Transverse colon (tissue), 4 donors: ENCODE measurements at regions of chr12 and their contacts with region 1.

Region 1: GRCh38 chr12:115752913-115753726 is 524.4 kb downstream of the MED13L start:
- DNase-seq: peak; percentile 14
- H3K4me3 ChIP-seq: no peak overlapping the region
- H3K27ac ChIP-seq: no peak overlapping the region
- H3K4me1 ChIP-seq: peaks cover 0 to 3% (median 0%) of the 10 kb centered on the region in 4 donors
- H3K27me3 ChIP-seq: peaks cover 45% of the 10 kb centered on the region
- CTCF ChIP-seq: peak; percentile 52 to 70 (median 63)
- EP300 ChIP-seq: no peak
- POLR2A ChIP-seq: no peak

Region 2: GRCh38 chr12:114073076-114073475 is 1680.0 kb before region 1 on chr12:
- in situ Hi-C with region 1: no loop called
- intact Hi-C with region 1: no loop called
- DNase-seq: no peak
- H3K4me3 ChIP-seq: no peak overlapping the region
- H3K27ac ChIP-seq: no peak overlapping the region
- H3K4me1 ChIP-seq: no peaks in the 10 kb centered on the region
- H3K27me3 ChIP-seq: no peaks in the 10 kb centered on the region
- CTCF ChIP-seq: no peak
- EP300 ChIP-seq: no peak
- POLR2A ChIP-seq: no peak

Region 3: DNA sequence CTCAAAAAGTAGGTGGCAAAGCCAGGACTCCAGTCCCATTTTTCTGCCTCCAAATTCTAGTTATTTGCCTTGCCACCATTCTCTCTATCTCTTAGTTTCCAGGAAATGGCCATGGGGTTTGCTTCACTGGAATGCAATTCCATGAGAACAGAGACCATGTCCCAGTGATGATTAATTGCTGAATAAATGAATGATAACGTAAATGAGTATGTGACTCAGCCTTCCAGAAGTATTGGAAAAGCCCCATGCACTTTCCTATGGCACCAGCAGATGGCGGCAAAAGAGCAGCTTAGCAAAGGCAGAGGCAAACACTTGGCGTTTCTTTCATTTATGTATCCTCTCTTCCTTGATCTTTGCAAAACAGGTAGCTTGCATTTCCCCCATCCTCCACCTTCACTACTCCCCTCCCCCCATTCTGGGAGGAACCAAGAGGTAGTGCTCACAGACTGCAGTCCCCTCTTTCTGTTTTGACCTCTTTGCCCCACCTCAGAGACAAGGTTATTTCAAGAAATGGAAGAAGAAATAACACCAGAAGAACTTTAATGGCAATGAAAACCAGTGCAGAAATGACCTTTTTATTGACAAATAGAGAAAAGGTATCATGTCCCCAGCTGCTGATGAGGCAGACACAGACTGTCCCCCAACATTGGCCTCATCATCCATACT is 1090.5 kb before region 1 on chr12:
- in situ Hi-C with region 1: loop called in 3 of 4 experiments (anchors 5 to 10 kb)
- intact Hi-C with region 1: loop called (anchors 2 kb)
- DNase-seq: peak; percentile 84
- H3K4me3 ChIP-seq: no peak overlapping the region
- H3K27ac ChIP-seq: no peak overlapping the region
- H3K4me1 ChIP-seq: peaks cover under 1 to 20% (median 4%) of the 10 kb centered on the region in 4 donors
- H3K27me3 ChIP-seq: peaks cover 61% of the 10 kb centered on the region
- CTCF ChIP-seq: peak; percentile 90 to 96 (median 94)
- EP300 ChIP-seq: no peak
- POLR2A ChIP-seq: no peak

Region 4: GRCh38 chr12:114674239-114675047 is 1078.7 kb before region 1 on chr12:
- in situ Hi-C with region 1: loop called in 3 of 4 experiments (anchors 5 to 10 kb)
- intact Hi-C with region 1: no loop called
- DNase-seq: no peak
- H3K4me3 ChIP-seq: no peak overlapping the region
- H3K27ac ChIP-seq: peak overlapping the region in 2 of 4 donors; percentile 8 to 49
- H3K4me1 ChIP-seq: no peaks in the 10 kb centered on the region
- H3K27me3 ChIP-seq: peaks cover 38% of the 10 kb centered on the region
- CTCF ChIP-seq: no peak
- EP300 ChIP-seq: no peak
- POLR2A ChIP-seq: no peak

Region 5: GRCh38 chr12:115683240-115683780 is 69.8 kb before region 1 on chr12:
- in situ Hi-C with region 1: no loop called
- intact Hi-C with region 1: no loop called
- DNase-seq: no peak
- H3K4me3 ChIP-seq: no peak overlapping the region
- H3K27ac ChIP-seq: no peak overlapping the region
- H3K4me1 ChIP-seq: no peaks in the 10 kb centered on the region
- H3K27me3 ChIP-seq: no peaks in the 10 kb centered on the region
- CTCF ChIP-seq: no peak
- EP300 ChIP-seq: no peak
- POLR2A ChIP-seq: no peak